Activated T-helper 1 cell treated with anti-CD3 and anti-CD28 coated beads, Interleukin-12 subunit alpha, Interleukin-12 subunit beta, Interleukin-2, Interleukin-4 antibody, amounts not matched to agents 30 ng/mL and 10 ng/mL and 1 ng/mL, durations not matched to agents 14 hours and 24 hours and 36 hours (primary cell): ENCODE measurements at regions of chr11 and their contacts with region 1.

Region 1: GRCh38 chr11:108135845-108136544 is 14.6 kb downstream of the ACAT1 start:
- DNase-seq: no peak
- H3K4me3 Mint-ChIP-seq: no peak overlapping the region
- H3K27ac Mint-ChIP-seq: peak overlapping the region; percentile 52
- H3K4me1 Mint-ChIP-seq: peaks cover 16% of the 10 kb centered on the region
- H3K27me3 Mint-ChIP-seq: no peaks in the 10 kb centered on the region

Region 2: DNA sequence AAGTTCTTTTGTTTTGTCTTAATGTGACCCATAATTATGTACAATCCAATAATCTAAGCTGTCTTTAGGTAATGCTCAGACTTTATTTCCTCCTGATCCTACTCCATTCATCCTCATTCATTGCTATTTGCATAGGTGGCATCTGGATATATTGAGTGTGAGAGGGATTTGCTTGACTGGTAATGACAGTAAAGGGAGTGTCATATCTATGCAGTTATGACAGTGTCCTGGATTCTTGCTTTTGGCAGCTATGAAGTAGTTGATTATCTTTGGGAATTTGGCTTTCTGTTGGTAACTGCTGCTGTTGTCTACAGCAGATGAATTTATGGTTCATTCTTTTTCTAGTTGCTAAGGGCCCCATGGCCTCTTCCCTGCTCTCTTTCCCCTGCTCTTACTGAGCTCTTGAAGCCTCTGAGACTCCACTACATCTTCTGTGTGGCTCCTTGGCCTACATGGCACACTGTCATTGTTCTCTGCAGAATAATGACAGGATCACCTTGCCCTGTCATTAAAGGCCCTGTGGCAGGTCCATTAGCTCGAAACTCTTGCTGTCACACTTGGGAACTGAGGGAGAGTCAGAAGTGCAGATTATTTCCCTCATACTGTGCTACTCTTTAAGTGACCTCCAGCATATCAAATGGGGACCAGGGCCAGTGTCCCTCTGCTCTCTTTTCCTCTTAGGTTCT is 34.8 kb before region 1 on chr11:
- intact Hi-C with region 1: no loop called
- DNase-seq: no peak
- H3K4me3 Mint-ChIP-seq: no peak overlapping the region
- H3K27ac Mint-ChIP-seq: no peak overlapping the region
- H3K4me1 Mint-ChIP-seq: no peaks in the 10 kb centered on the region
- H3K27me3 Mint-ChIP-seq: no peaks in the 10 kb centered on the region

Region 3: GRCh38 chr11:108121274-108122155 is 14.5 kb before region 1 on chr11 and contains the start of gene ACAT1:
- intact Hi-C with region 1: loop called (anchors 1 kb)
- DNase-seq: peak; percentile 95
- H3K4me3 Mint-ChIP-seq: peak within 1 kb of the TSS; percentile 97
- H3K27ac Mint-ChIP-seq: peak within 1 kb of the TSS; percentile 82
- H3K4me1 Mint-ChIP-seq: peaks cover 36% of the 10 kb centered on the region
- H3K27me3 Mint-ChIP-seq: no peaks in the 10 kb centered on the region
- total RNA-seq, gene ACAT1: 52.8 and 56.8 TPM in 2 replicates

Region 4: GRCh38 chr11:108199446-108200321 is 63.7 kb after region 1 on chr11:
- intact Hi-C with region 1: loop called (anchors 2 kb)
- DNase-seq: peak; percentile 48
- H3K4me3 Mint-ChIP-seq: peak overlapping the region; percentile 34
- H3K27ac Mint-ChIP-seq: peak overlapping the region; percentile 93
- H3K4me1 Mint-ChIP-seq: peaks cover 55% of the 10 kb centered on the region
- H3K27me3 Mint-ChIP-seq: no peaks in the 10 kb centered on the region

Region 5: DNA sequence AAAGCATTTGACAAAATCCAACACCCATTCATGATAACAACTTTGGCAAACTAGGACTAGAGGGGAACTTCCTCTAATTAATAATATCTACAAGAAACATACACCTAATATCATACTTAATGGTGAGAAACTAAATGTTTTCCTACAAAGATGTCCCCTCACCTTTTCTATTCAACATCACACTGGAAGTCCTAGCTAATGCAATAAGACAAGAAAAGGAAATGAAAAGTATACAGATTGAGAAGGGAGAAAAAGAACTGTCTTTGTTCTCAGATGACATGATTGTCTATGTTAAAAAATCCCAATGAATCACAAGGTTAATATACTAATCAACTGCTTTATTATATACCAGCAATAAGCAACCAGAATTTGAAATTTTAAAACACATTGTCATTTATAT is 279.0 kb after region 1 on chr11:
- intact Hi-C with region 1: no loop called
- DNase-seq: no peak
- H3K4me3 Mint-ChIP-seq: no peak overlapping the region
- H3K27ac Mint-ChIP-seq: no peak overlapping the region
- H3K4me1 Mint-ChIP-seq: no peaks in the 10 kb centered on the region
- H3K27me3 Mint-ChIP-seq: no peaks in the 10 kb centered on the region